Left ventricle myocardium inferior (tissue), 1 donor: ENCODE measurements at regions of chr3 and their contacts with region 1.

Region 1: GRCh38 chr3:157148196-157148889 is 11.6 kb downstream of the CCNL1 start:
- DNase-seq: no peak
- H3K4me3 ChIP-seq: no peak overlapping the region
- H3K27ac ChIP-seq: no peak overlapping the region
- H3K4me1 ChIP-seq: peaks cover 15% of the 10 kb centered on the region
- H3K27me3 ChIP-seq: no peaks in the 10 kb centered on the region
- CTCF ChIP-seq: no peak

Region 2: GRCh38 chr3:156691920-156692319 is 456.4 kb before region 1 on chr3:
- intact Hi-C with region 1: loop called (anchors 10 kb)
- DNase-seq: no peak
- H3K4me3 ChIP-seq: peak overlapping the region; percentile 20
- H3K27ac ChIP-seq: peak overlapping the region; percentile 2
- H3K4me1 ChIP-seq: peaks cover 76% of the 10 kb centered on the region
- H3K27me3 ChIP-seq: no peaks in the 10 kb centered on the region
- CTCF ChIP-seq: no peak